Spleen (tissue), 13 donors: ENCODE measurements at regions of chr11 and their contacts with region 1.

Region 1: DNA sequence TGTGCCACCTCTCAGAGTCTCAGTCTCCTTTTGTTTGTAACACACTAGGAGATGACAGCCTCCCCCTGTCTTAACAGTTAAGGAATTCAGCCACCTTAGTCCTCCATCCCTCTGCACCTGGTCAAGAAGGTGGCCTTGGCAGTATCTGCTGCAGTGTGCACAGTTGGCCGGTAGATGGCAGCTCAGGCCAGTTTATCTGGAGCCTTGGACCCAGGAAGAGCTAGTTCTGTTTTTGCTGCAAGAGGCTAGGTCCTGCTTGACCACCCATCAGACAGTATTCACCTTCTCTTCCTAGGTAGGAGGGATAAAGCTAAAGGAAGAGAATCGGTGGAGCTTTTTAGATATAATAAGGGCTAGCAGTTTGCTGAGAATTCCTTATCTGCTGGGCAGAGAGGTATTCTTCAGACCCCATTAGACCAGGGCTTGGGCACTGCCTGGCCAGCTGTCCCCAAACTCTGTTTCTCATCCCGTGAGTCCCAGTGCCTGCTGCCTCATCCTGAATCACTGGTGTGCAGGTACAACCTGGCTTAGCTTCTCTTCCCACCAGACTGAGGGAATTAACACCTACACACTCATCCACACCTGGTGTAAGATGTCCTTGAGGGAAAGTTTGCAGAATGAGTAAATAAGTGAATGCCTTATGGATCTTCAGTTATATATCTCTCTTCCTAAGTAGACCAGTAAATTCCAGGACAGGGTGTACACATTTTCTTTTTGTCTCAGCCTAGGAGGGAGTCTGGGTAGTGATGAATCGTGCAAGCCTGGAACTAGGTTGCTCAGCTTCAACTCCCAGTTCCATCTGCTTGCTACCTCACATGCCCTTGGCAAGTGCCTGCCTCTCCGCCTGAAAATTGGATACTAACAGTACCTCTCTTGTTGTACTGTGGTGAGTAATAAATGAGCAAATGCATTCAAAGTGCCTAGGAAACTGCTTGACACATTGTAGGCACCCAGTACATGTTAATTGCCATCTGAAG is 70.8 kb upstream of the NARS2 start:
- DNase-seq: peak; percentile 82
- H3K4me3 ChIP-seq: no peak overlapping the region
- H3K27ac ChIP-seq: no peak overlapping the region
- H3K4me1 ChIP-seq: peaks cover 0 to 6% (median 0%) of the 10 kb centered on the region in 6 donors
- H3K27me3 ChIP-seq: peaks cover 0 to 26% (median 0%) of the 10 kb centered on the region in 7 donors
- CTCF ChIP-seq: peak; percentile 73 to 93 (median 90)
- POLR2A ChIP-seq: no peak

Region 2: DNA sequence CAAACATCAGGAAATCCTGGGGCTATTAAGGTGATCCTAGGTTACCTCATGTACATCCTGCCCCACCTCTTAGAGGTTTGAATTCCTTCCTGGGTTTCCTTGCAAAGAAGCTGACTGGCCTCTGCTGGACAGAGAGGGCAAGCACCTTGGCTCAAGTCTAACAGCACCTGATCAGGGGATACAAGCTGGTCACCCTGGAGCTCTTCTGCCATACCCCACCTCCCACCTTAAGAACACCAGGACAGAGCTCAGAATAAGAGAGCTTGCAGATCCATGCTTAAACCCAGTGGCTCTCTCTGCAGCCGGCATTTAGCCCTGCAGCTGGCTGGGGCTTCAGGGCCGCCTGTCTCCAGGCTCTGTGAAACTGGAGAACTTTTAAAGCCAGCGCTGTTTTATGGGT is 315.7 kb after region 1 on chr11:
- intact Hi-C with region 1: loop called (anchors 5 kb)
- DNase-seq: no peak
- H3K4me3 ChIP-seq: no peak overlapping the region
- H3K27ac ChIP-seq: no peak overlapping the region
- H3K4me1 ChIP-seq: peaks cover 0 to 16% (median 0%) of the 10 kb centered on the region in 6 donors
- H3K27me3 ChIP-seq: peaks cover 0 to 67% (median 16%) of the 10 kb centered on the region in 7 donors
- CTCF ChIP-seq: peak in 3 of 11 experiments; percentile 19 to 36 (median 36)
- POLR2A ChIP-seq: no peak

Region 3: GRCh38 chr11:79076526-79077115 is 431.1 kb after region 1 on chr11:
- intact Hi-C with region 1: loop called (anchors 10 kb)
- DNase-seq: no peak
- H3K4me3 ChIP-seq: no peak overlapping the region
- H3K27ac ChIP-seq: no peak overlapping the region
- H3K4me1 ChIP-seq: no peaks in the 10 kb centered on the region
- H3K27me3 ChIP-seq: no peaks in the 10 kb centered on the region
- CTCF ChIP-seq: peak in 10 of 11 experiments; percentile 13 to 68 (median 46)
- POLR2A ChIP-seq: no peak

Region 4: DNA sequence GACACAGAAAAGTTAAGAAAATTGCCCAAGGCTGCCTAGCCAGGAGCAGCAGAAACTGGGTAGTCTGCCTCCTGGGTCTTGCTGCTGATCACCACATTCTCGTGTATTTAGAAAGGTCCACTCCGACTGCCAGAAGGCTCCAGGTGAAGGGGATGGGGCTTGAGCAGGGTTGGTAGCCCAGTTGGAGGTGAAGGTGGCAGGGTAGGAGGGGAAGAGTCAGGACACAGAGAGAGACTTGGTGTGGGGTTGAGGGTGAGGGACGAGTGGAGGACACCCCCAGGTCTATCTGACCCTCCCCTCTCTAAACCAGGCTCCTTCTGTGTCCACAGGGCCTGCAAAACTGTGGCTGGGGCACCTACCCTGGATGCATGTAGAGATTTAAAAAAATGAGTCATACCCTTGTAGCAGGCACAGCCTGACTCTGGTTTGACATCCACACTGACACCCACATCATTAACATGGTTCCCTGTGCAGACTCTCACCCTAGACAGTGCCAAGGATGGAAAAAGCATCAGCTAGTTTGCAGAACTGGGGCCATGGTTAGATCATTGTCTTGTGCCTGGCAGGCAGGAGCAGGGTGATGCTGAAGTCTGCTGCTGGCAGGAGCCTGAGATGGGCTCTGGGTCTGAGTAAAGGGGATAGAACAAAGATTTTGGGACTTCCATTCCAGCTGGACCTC is 522.1 kb after region 1 on chr11:
- intact Hi-C with region 1: no loop called
- DNase-seq: no peak
- H3K4me3 ChIP-seq: no peak overlapping the region
- H3K27ac ChIP-seq: no peak overlapping the region
- H3K4me1 ChIP-seq: no peaks in the 10 kb centered on the region
- H3K27me3 ChIP-seq: peaks cover 0 to 13% (median 0%) of the 10 kb centered on the region in 7 donors
- CTCF ChIP-seq: no peak
- POLR2A ChIP-seq: no peak

Region 5: DNA sequence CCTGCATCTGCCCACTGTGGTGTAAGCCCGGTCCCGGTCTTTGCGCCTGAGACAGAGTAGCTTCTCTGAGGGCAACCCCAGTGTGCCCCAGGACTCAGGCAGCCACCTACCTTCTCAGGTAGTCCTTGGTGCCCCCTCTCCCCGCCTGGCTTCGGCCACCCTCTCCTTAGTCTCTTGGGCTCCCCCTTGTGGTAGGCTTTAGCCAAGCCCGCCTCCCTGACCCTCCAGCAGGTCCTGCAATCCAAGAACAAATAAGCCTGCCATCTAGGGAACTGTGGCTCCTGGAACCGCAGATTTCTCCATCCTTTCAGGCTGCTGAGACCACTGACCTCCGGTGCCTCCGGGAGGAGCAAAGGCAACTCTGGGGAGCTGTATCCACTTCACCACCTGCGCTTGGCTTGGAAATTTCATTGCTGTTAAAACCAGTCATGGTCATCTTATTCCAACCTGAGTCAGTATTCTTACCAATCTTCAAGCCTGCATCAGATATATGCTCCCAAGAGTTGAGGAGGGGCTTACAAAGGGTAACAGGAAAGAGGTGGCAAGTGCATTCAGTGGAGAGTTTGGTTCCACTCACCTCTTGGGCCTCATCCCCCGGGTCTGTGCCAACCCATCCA is 848.1 kb after region 1 on chr11:
- intact Hi-C with region 1: loop called (anchors 5 kb)
- DNase-seq: peak; percentile 81
- H3K4me3 ChIP-seq: no peak overlapping the region
- H3K27ac ChIP-seq: no peak overlapping the region
- H3K4me1 ChIP-seq: no peaks in the 10 kb centered on the region
- H3K27me3 ChIP-seq: peaks cover 0 to 10% (median 0%) of the 10 kb centered on the region in 7 donors
- CTCF ChIP-seq: peak; percentile 38 to 85 (median 65)
- POLR2A ChIP-seq: no peak